Aorta (tissue), 5 donors: ENCODE measurements at regions of chr12 and their contacts with region 1.

Region 1: GRCh38 chr12:77724367-77724957 is 106.2 kb upstream of the NAV3 start:
- DNase-seq: no peak
- ATAC-seq: peak; percentile 65
- H3K4me3 ChIP-seq: no peak overlapping the region
- H3K27ac ChIP-seq: no peak overlapping the region
- H3K4me1 ChIP-seq: no peaks in the 10 kb centered on the region
- H3K27me3 ChIP-seq: no peaks in the 10 kb centered on the region

Region 2: GRCh38 chr12:77766224-77766623 is 41.8 kb after region 1 on chr12:
- intact Hi-C with region 1: no loop called
- DNase-seq: no peak
- ATAC-seq: peak; percentile 29
- H3K4me3 ChIP-seq: no peak overlapping the region
- H3K27ac ChIP-seq: no peak overlapping the region
- H3K4me1 ChIP-seq: no peaks in the 10 kb centered on the region
- H3K27me3 ChIP-seq: no peaks in the 10 kb centered on the region

Region 3: GRCh38 chr12:77925536-77926108 is 201.2 kb after region 1 on chr12:
- intact Hi-C with region 1: loop called (anchors 5 to 10 kb)
- DNase-seq: peak; percentile 60 to 77
- ATAC-seq: peak; percentile 85
- H3K4me3 ChIP-seq: no peak overlapping the region
- H3K27ac ChIP-seq: no peak overlapping the region
- H3K4me1 ChIP-seq: no peaks in the 10 kb centered on the region
- H3K27me3 ChIP-seq: no peaks in the 10 kb centered on the region